ENCODE measurements at regions of chr10 and their contacts with region 1.

Region 1: DNA sequence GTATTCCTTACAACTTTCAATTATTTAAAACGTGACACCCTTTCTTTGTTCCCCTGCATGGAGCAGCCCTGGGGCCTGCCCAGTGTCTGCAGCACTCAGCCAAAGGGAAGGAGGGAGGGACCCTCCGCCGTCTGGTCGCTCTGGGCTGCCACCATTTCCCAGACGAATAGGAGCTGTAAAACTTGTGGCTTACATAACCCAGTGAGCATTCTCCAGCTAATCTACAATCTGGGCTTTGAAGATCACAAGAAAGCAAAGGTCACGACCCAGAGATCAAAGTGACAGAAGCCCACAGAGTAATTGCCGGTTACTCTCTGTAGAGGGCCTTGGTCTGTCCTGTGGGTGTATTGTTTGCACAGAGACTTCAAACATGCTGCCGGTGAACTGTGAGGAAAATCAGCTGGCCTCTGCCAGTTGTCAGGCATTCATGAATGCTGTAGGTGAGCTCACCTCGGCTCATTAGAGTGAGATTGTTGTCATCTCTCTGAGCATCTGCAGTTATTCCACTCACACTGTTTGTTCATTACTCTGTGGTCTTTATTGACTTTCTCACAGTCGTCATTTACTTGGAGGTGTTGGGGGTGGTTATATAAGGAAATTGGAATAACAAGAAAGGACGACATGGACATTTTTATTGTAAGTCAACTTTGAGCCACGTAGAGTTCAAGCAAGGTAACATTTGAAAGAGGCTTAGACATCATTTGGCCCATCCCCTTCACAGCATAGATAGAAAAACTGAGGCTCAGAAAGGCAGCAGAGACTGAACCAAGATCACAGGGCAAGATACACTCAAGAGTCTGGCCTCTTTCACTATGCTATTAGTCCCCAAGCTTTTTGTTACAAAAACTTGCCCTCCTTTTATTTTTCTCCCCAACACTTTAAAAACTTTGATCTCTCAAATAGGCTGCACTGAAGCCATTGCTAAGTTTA is 619.8 kb downstream of the LRMDA start:
- DNase-seq: no peak
- ATAC-seq: no peak
- H3K4me3 ChIP-seq: no peak overlapping the region
- H3K27ac ChIP-seq: no peak overlapping the region
- H3K4me1 ChIP-seq: no peaks in the 10 kb centered on the region
- CTCF ChIP-seq: no peak
- EP300 ChIP-seq: no peak
- POLR2A ChIP-seq: no peak
- RAD21 ChIP-seq: no peak

Region 2: GRCh38 chr10:76036111-76036940 is 14.9 kb before region 1 on chr10:
- CTCF ChIA-PET with region 1: interaction called, 24 read pairs
- POLR2A ChIA-PET with region 1: no interaction called
- DNase-seq: peak; percentile 64 to 65
- ATAC-seq: peak; percentile 64 to 82
- H3K4me3 ChIP-seq: peak overlapping the region; percentile 9; the same call in 1 of the 3 replicates
- H3K27ac ChIP-seq: peak overlapping the region; percentile 47 to 75
- H3K4me1 ChIP-seq: peaks cover 48% of the 10 kb centered on the region
- CTCF ChIP-seq: peak; percentile 86
- EP300 ChIP-seq: no peak
- POLR2A ChIP-seq: no peak
- RAD21 ChIP-seq: peak; percentile 81 to 88

Region 3: DNA sequence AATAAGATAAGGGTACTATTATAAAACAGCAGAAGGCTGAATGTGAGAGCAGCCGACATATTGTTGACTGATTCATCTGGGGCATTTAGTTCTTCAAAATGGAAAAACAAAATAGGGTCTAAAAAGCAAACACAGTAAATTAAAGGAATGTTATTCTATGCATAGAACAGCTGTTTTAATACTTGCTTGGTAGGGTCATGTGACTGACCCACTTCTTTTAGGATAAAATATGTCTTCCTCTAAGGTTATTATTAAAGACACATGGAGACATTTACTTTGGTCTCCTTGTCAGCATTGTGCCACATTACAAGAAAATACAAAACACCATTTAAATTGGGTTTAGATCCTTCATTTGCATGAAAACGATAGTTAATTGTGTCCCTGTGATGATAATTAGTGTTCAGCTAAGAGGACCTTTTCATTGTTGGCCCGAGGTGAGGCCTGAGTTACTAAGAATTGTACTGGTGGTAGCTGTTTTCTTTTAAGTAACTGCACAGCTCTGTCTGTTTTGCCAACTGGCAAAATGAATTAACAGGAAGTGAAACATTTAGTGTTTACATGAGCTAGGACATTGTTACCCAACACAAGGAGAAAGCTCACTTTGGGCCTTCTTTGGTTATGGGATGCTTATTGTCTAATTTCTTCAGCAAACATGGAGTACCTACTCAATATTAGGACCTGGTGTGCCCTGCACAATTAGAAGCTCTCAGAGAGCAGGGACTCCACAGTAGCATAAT is 144.6 kb after region 1 on chr10:
- CTCF ChIA-PET with region 1: no interaction called
- POLR2A ChIA-PET with region 1: no interaction called
- DNase-seq: no peak
- ATAC-seq: no peak
- H3K4me3 ChIP-seq: no peak overlapping the region
- H3K27ac ChIP-seq: no peak overlapping the region
- H3K4me1 ChIP-seq: no peaks in the 10 kb centered on the region
- CTCF ChIP-seq: no peak
- EP300 ChIP-seq: no peak
- POLR2A ChIP-seq: no peak
- RAD21 ChIP-seq: no peak